CD4-positive, alpha-beta memory T cell (primary cell): ENCODE measurements at regions of chr10 and their contacts with region 1.

Region 1: DNA sequence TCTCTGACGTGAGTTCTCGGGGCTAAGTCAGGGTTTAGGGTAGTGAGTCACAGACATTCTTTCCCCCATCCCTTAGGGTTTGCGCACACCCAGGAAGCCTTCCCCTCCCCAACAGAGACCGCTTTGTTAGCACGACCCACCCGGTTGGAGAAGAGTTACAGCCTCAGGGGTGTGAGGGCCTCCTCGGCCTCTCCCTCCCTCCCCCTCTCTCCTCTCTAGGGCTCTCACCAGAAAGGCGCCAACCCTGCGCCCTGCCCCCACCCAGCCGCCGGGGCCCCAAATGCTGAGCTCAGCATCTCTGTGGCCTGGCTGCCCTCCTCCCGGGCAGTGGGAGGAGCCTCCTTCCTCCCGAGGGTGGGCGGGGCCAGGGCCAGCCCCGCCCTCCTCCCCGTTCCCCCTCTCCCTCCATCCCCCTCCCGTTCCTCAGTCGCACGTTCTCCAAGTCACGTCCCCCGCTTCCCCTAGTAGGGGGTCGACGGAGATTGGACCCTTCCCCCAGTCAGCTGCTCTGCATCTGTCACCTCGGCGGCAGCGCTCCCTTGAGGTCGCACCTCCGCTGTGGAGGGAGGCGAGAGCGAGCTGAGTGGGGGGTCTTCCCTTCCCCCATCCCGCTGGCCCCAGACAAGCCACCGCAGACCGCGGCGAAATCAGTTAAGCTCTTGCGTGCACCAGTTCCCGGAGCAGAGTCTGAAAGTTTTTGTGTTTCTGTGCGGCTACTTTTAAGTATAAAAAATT is 13.0 kb upstream of the DDIT4 start:
- DNase-seq: peak; percentile 77 to 92 (median 80)
- H3K4me3 ChIP-seq: peak overlapping the region; percentile 52 to 90
- H3K4me3 Mint-ChIP-seq: peak overlapping the region; percentile 84 to 93 (median 89)
- H3K27ac ChIP-seq: peak overlapping the region; percentile 74
- H3K27ac Mint-ChIP-seq: peak overlapping the region; percentile 95 to 98 (median 96)
- H3K4me1 ChIP-seq: peaks cover 89% of the 10 kb centered on the region
- H3K4me1 Mint-ChIP-seq: peaks cover 49 to 77% (median 63%) of the 10 kb centered on the region in 4 donors
- H3K27me3 ChIP-seq: no peaks in the 10 kb centered on the region
- H3K27me3 Mint-ChIP-seq: no peaks in the 10 kb centered on the region

Region 2: GRCh38 chr10:71921324-71922027 is 339.3 kb before region 1 on chr10:
- CTCF ChIA-PET with region 1: no interaction called
- POLR2A ChIA-PET with region 1: no interaction called
- intact Hi-C with region 1: no loop called
- DNase-seq: no peak
- H3K4me3 ChIP-seq: no peak overlapping the region
- H3K4me3 Mint-ChIP-seq: no peak overlapping the region
- H3K27ac ChIP-seq: no peak overlapping the region
- H3K27ac Mint-ChIP-seq: peak overlapping the region in 1 of 7 donors; percentile 10
- H3K4me1 ChIP-seq: no peaks in the 10 kb centered on the region
- H3K4me1 Mint-ChIP-seq: no peaks in the 10 kb centered on the region
- H3K27me3 ChIP-seq: no peaks in the 10 kb centered on the region
- H3K27me3 Mint-ChIP-seq: peaks cover 0 to 2% of the 10 kb centered on the region in 2 donors

Region 3: GRCh38 chr10:72223743-72224101 is 37.0 kb before region 1 on chr10:
- CTCF ChIA-PET with region 1: interaction called, 11 read pairs
- POLR2A ChIA-PET with region 1: interaction called, 6 read pairs
- intact Hi-C with region 1: loop called (anchors 5 kb)
- DNase-seq: no peak
- H3K4me3 ChIP-seq: no peak overlapping the region
- H3K4me3 Mint-ChIP-seq: peak overlapping the region in 3 of 8 donors; percentile 22 to 69 (median 44)
- H3K27ac ChIP-seq: no peak overlapping the region
- H3K27ac Mint-ChIP-seq: peak overlapping the region; percentile 17 to 91 (median 78)
- H3K4me1 ChIP-seq: peaks cover 54% of the 10 kb centered on the region
- H3K4me1 Mint-ChIP-seq: peaks cover 36 to 57% (median 45%) of the 10 kb centered on the region in 4 donors
- H3K27me3 ChIP-seq: no peaks in the 10 kb centered on the region
- H3K27me3 Mint-ChIP-seq: no peaks in the 10 kb centered on the region

Region 4: GRCh38 chr10:72248468-72249151 is 12.1 kb before region 1 on chr10:
- CTCF ChIA-PET with region 1: interaction called, 21 read pairs
- POLR2A ChIA-PET with region 1: interaction called, 102 read pairs
- intact Hi-C with region 1: loop called (anchors 1 kb)
- DNase-seq: peak; percentile 85 to 90 (median 87)
- H3K4me3 ChIP-seq: peak overlapping the region; percentile 31 to 33
- H3K4me3 Mint-ChIP-seq: peak overlapping the region; percentile 83 to 92 (median 86)
- H3K27ac ChIP-seq: peak overlapping the region; percentile 55
- H3K27ac Mint-ChIP-seq: peak overlapping the region; percentile 95 to 98 (median 96)
- H3K4me1 ChIP-seq: peaks cover 96% of the 10 kb centered on the region
- H3K4me1 Mint-ChIP-seq: peaks cover 58 to 91% (median 77%) of the 10 kb centered on the region in 4 donors
- H3K27me3 ChIP-seq: no peaks in the 10 kb centered on the region
- H3K27me3 Mint-ChIP-seq: no peaks in the 10 kb centered on the region

Region 5: DNA sequence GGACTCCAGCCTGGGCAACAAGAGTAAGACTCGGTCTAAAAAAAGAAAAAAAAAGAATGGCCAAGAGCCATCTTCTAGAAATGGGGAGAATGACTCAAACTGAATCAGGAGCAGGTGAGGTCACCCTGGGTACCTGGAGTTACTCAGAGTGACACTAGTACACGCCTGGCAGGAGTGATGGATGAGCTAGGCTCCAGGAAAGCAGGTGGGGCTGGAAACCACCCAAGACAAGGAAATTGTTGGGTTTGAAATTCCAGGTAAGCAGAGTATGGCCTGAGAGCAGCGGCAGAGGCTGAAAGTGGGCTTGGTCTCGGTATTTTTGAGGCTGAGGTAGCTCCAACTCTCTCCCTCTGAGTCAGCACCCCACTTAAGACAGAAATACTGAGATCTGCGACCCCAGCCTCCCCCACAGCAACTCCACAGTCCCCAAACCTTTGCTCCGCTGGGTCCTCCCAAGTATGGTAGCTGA is 31.5 kb after region 1 on chr10:
- CTCF ChIA-PET with region 1: no interaction called
- POLR2A ChIA-PET with region 1: interaction called, 47 read pairs
- intact Hi-C with region 1: loop called (anchors 1 kb)
- DNase-seq: peak in 2 of 5 donors; percentile 9 to 57
- H3K4me3 ChIP-seq: no peak overlapping the region
- H3K4me3 Mint-ChIP-seq: peak overlapping the region in 6 of 8 donors; percentile 7 to 70 (median 34)
- H3K27ac ChIP-seq: no peak overlapping the region
- H3K27ac Mint-ChIP-seq: peak overlapping the region; percentile 75 to 99 (median 88)
- H3K4me1 ChIP-seq: peaks cover 66% of the 10 kb centered on the region
- H3K4me1 Mint-ChIP-seq: peaks cover 41 to 67% (median 57%) of the 10 kb centered on the region in 4 donors
- H3K27me3 ChIP-seq: no peaks in the 10 kb centered on the region
- H3K27me3 Mint-ChIP-seq: no peaks in the 10 kb centered on the region

Region 6: GRCh38 chr10:72297968-72298773 is 37.4 kb after region 1 on chr10:
- CTCF ChIA-PET with region 1: no interaction called
- POLR2A ChIA-PET with region 1: interaction called, 47 read pairs
- intact Hi-C with region 1: loop called (anchors 1 kb)
- DNase-seq: peak; percentile 89 to 95 (median 91)
- H3K4me3 ChIP-seq: peak overlapping the region in 1 of 2 donors; percentile 71
- H3K4me3 Mint-ChIP-seq: peak overlapping the region; percentile 29 to 94 (median 86)
- H3K27ac ChIP-seq: peak overlapping the region; percentile 95
- H3K27ac Mint-ChIP-seq: peak overlapping the region; percentile 96 to 100 (median 100)
- H3K4me1 ChIP-seq: peaks cover 56% of the 10 kb centered on the region
- H3K4me1 Mint-ChIP-seq: peaks cover 26 to 67% (median 46%) of the 10 kb centered on the region in 4 donors
- H3K27me3 ChIP-seq: no peaks in the 10 kb centered on the region
- H3K27me3 Mint-ChIP-seq: no peaks in the 10 kb centered on the region

Region 7: GRCh38 chr10:72319416-72320254 is 58.9 kb after region 1 on chr10:
- CTCF ChIA-PET with region 1: interaction called, 4 read pairs
- POLR2A ChIA-PET with region 1: interaction called, 40 read pairs
- intact Hi-C with region 1: no loop called
- DNase-seq: peak; percentile 87 to 91 (median 89)
- H3K4me3 ChIP-seq: peak overlapping the region; percentile 46 to 55
- H3K4me3 Mint-ChIP-seq: peak overlapping the region; percentile 79 to 89 (median 84)
- H3K27ac ChIP-seq: peak overlapping the region; percentile 89
- H3K27ac Mint-ChIP-seq: peak overlapping the region; percentile 96 to 99 (median 99)
- H3K4me1 ChIP-seq: peaks cover 95% of the 10 kb centered on the region
- H3K4me1 Mint-ChIP-seq: peaks cover 53 to 92% (median 74%) of the 10 kb centered on the region in 4 donors
- H3K27me3 ChIP-seq: no peaks in the 10 kb centered on the region
- H3K27me3 Mint-ChIP-seq: no peaks in the 10 kb centered on the region